ENCODE measurements at regions of chr6 and their contacts with region 1.

Region 1: DNA sequence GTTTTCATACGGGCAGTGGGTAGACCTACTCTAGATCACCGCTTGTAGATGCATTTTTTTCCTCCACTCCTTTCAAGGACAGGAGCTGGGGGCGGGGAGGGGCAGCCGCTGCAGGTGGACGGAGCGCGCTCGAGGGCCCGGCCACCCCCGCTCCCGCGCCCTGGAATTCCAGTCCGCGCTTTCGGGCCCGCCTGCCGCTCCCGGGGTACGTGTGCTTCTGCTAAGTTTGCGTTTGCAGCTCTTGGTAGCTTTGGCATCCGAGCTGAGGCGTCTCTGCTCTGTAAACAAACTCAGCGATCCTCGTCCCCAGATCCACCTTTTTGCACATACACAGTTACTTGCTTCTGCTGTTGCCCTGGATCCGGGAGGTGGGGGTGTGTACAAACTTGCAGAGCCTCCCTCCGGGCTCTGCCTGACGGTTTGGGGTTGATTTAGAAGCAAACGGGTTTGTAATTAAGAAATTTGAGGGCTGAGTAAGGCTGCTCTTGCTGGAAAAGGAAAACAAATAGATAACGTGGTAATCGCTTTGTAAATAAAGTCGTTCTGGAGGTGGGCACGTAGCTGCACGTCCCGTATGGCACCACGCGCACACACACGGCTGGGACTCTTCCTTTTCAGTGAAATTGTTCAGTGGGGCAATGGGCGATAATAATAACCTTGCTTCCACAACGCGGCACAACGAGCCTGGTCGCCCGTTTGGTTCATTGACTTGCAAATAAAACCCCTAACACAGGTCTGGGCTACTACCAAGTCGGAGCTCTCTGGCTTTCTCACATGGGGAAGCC is 976 bp upstream of the CITED2 start:
- DNase-seq: peak; percentile 88 to 93
- H3K4me3 ChIP-seq: peak overlapping the region; percentile 80 to 89
- H3K27ac ChIP-seq: peak overlapping the region; percentile 95 to 99
- H3K4me1 ChIP-seq: no peaks in the 10 kb centered on the region
- H3K27me3 ChIP-seq: no peaks in the 10 kb centered on the region
- CTCF ChIP-seq: peak in 2 of 4 experiments; percentile 4 to 25
- POLR2A ChIP-seq: peak; percentile 19 to 61

Region 2: DNA sequence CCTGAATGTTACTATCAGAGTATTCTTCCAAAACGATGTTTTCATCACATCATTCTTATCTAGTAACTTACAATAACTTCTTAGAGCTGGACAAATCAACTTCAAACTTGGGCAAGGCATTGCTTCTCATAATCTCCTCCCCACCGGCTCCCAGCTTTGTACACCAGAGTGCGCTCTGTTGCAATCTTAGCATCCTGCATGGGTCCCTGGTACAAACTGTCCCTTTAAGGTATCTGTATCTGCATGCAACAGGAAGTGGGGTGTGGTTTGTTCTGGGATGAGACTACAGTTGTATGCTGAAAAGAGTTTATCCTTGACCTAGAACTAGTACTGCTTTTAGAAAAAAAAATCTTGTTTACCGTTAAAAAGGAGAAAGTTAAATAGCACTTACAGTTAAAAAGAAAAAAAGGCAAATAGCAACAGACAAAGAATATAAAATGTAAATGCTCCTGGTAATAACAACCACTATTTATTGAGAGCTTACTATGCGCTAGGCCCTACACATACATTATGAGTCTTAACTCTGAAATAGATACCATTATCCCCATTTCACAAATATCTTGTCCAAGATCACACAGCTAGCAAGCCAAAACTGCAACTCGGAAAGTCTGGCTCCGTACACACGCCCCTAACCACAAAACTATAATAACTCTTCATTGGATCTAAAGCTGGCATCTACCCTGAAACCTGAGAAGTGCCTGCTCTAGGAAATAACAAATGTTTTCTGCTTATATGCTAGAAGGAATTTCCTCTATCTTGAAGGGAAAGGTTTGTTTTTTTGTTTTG is 250.3 kb before region 1 on chr6:
- intact Hi-C with region 1: no loop called
- DNase-seq: peak in 1 of 2 donors; percentile 37
- H3K4me3 ChIP-seq: no peak overlapping the region
- H3K27ac ChIP-seq: no peak overlapping the region
- H3K4me1 ChIP-seq: no peaks in the 10 kb centered on the region
- H3K27me3 ChIP-seq: no peaks in the 10 kb centered on the region
- CTCF ChIP-seq: no peak
- POLR2A ChIP-seq: no peak

Region 3: DNA sequence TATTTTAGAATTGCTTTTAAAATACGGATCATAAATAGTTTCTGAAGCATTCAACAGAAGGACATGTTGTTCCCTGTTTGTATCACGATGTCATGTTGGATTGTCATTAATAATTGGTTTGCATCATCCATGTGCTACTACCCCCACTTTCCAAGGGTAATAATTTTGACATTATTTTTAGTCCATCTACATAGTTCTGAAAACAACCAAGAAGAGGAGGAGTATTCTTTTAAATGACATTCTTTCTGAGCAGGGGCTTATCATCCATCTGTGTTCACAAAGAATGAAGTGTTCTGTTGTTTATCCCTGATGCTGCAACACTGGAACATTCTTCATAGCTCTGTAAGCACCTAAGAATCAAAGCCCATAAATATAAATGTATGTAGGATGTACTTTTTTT is 150.0 kb after region 1 on chr6:
- intact Hi-C with region 1: loop called (anchors 2 kb)
- DNase-seq: no peak
- H3K4me3 ChIP-seq: no peak overlapping the region
- H3K27ac ChIP-seq: peak overlapping the region; percentile 79 to 94
- H3K4me1 ChIP-seq: no peaks in the 10 kb centered on the region
- H3K27me3 ChIP-seq: no peaks in the 10 kb centered on the region
- CTCF ChIP-seq: no peak
- POLR2A ChIP-seq: no peak

Region 4: DNA sequence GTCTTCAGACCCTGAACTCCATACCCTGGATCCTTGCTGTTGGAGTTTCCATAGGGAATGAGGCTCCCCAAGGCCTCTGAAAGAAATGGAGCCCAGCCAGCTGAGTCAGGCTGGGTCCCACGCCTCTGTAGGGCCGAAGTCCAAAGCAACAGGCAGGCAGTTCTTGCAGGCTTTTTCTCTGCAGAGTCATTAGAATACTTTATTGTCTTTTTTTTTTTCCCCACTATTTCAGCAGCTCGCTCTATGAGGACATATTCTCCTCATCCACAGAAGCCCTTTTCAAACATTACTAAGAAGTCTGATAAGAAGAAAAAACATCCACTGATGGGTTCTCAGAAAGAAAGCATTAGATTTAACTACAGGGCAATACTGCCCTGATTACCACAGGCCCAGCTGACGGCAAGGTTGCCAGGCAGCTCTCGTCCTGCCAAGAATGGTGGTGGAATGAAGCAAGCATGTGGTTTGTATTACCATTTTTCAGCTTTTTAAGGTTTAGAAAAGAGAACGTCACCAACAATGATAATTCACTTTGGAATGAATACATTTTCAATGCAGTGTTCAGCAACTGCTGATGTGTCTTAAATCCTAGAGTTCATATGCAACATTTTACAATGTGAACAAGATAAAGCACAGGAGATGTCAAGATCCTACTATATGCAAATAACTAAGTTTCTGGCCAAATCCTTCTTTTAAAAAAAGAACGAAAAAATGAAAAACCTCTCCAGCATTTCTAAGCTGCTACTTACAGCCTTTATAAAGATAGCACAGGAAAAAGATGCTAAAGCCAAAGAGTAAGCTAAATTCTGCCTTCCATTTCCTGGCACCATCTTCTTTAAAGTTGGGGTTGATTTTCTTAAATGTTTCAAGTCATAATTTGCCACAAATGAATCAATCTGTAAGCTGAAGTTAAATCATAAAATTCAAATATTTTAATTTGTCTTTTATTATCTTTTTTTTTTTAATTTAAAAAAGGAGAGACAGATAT is 222.6 kb after region 1 on chr6:
- intact Hi-C with region 1: loop called (anchors 10 kb)
- DNase-seq: peak; percentile 84 to 87
- H3K4me3 ChIP-seq: no peak overlapping the region
- H3K27ac ChIP-seq: peak overlapping the region; percentile 80 to 85
- H3K4me1 ChIP-seq: no peaks in the 10 kb centered on the region
- H3K27me3 ChIP-seq: no peaks in the 10 kb centered on the region
- CTCF ChIP-seq: no peak
- POLR2A ChIP-seq: no peak

Measured in uterus (tissue), 4 donors.